ENCODE measurements at regions of chr3 and their contacts with region 1.

Region 1: DNA sequence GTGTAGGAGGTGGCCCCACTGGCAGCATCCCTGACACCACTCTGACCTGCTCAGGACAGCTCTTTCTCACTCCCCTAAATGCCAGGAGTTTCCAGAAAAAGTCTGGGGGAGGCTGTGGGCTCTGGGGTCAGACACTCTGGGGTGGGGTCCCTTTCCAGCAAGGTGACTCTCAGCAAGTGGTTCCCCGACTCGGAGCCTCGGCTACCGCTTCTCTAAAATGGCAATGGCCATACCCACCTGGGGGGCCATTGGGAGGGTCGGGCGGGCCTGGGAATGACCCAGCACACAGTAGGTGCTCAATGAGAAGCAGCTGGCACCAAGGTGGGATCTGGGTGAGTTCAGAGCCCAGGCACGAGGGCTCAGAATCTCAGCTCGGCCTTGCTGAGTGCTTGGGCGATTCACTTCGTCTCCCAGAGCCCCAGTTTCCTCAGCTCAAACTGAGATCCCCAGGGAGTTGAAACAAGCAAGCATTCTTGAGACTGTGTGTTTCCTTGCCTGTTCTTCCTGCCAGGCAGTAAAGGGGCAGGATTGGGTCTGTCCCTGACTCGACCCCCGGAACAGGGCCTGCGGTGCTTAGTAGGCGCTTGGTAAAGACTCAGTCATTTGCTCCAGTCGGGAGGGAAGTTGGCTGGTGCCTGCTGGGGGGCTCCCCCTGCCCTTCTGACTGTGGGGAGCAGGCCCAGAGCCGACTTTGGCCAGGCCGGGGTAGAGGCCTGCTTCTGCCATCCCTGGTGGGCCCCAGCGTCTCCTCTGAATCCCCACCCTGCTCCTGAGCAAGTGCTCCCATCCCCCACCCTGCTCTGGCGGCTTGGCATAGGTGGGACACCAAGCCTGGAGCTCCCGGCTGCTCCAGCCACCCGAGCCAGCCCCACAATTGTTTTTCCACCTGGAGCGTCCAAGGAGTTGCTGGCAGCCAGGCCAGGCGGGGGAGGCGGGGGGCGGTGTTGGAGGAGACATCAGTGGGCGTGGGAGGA is 32.9 kb upstream of the FBLN2 start:
- DNase-seq: no peak
- ATAC-seq: no peak
- H3K4me3 ChIP-seq: no peak overlapping the region
- H3K27ac ChIP-seq: no peak overlapping the region
- H3K4me1 ChIP-seq: no peaks in the 10 kb centered on the region
- H3K27me3 ChIP-seq: no peaks in the 10 kb centered on the region
- CTCF ChIP-seq: no peak

Region 2: GRCh38 chr3:13057282-13058040 is 458.6 kb before region 1 on chr3:
- CTCF ChIA-PET with region 1: no interaction called
- POLR2A ChIA-PET with region 1: no interaction called
- in situ Hi-C with region 1: no loop called
- intact Hi-C with region 1: no loop called
- DNase-seq: no peak
- ATAC-seq: peak; percentile 58
- H3K4me3 ChIP-seq: no peak overlapping the region
- H3K27ac ChIP-seq: no peak overlapping the region
- H3K4me1 ChIP-seq: no peaks in the 10 kb centered on the region
- H3K27me3 ChIP-seq: no peaks in the 10 kb centered on the region
- CTCF ChIP-seq: no peak

Region 3: DNA sequence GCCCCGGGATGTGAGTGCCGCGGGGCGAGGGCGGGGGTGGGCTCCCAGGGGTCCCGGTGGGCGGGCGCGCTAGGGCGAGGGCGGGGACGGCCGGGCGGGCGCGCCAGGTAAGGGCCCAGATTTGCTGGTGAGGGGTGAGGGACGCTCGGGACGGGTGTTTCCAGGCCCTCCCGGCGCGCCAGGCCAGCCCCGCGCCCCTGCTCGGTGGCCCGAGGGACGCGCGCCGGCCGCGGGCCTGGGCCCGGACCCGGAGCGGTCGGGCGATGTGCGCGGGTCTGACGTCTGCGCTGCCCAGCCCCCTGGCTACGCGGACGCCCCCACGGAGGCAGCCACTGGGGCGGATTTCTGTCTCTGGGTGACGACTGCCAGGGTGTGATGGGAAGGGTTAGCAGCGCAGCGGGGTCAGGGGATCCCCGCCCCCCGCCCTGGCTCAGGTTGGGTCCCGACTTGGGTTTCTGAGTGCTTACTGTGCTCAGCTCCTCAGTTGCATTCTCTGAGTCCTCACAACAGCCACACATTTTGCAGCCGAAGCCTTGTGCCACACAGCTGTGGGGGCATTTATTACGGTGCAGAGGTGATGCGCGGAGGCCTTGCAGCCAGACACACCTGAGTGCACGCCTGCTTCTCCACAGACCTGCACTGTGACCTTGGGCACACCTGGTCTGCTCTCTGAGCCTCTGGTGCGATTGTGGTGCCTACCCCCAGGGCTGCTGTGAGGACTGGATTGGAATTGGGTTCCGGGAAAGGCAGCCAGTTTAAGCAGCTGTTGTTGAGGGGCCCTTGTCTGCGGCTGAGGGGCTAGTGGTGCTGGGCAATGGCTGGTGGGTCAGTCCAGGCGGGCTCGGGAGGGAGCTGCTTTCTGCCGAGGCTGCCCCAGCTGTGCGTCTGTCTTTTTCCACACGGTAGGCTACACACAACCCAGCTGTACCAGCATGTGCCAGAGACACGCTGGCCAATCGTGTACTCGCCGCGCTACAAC is 35.4 kb before region 1 on chr3:
- CTCF ChIA-PET with region 1: interaction called, 11 read pairs
- POLR2A ChIA-PET with region 1: no interaction called
- in situ Hi-C with region 1: no loop called
- intact Hi-C with region 1: no loop called
- DNase-seq: no peak
- ATAC-seq: peak; percentile 57
- H3K4me3 ChIP-seq: peak overlapping the region; percentile 52 to 61
- H3K27ac ChIP-seq: no peak overlapping the region
- H3K4me1 ChIP-seq: no peaks in the 10 kb centered on the region
- H3K27me3 ChIP-seq: no peaks in the 10 kb centered on the region
- CTCF ChIP-seq: no peak

Region 4: GRCh38 chr3:13916375-13916774 is 400.3 kb after region 1 on chr3:
- CTCF ChIA-PET with region 1: no interaction called
- POLR2A ChIA-PET with region 1: no interaction called
- in situ Hi-C with region 1: no loop called
- intact Hi-C with region 1: no loop called
- DNase-seq: no peak
- ATAC-seq: no peak
- H3K4me3 ChIP-seq: no peak overlapping the region
- H3K27ac ChIP-seq: no peak overlapping the region
- H3K4me1 ChIP-seq: no peaks in the 10 kb centered on the region
- H3K27me3 ChIP-seq: no peaks in the 10 kb centered on the region
- CTCF ChIP-seq: no peak

Measured in Panc1 (cell line).